ENCODE measurements at regions of chr6 and their contacts with region 1.

Region 1: GRCh38 chr6:25490018-25490801 is 161.8 kb upstream of the SCGN start:
- DNase-seq: peak; percentile 73
- H3K4me3 ChIP-seq: no peak overlapping the region
- H3K27ac ChIP-seq: no peak overlapping the region
- H3K4me1 ChIP-seq: no peaks in the 10 kb centered on the region
- H3K27me3 ChIP-seq: no peaks in the 10 kb centered on the region
- CTCF ChIP-seq: peak; percentile 73 to 83
- POLR2A ChIP-seq: no peak

Region 2: GRCh38 chr6:25223490-25223991 is 266.7 kb before region 1 on chr6:
- CTCF ChIA-PET with region 1: interaction called, 57 read pairs
- POLR2A ChIA-PET with region 1: no interaction called
- dilution Hi-C with region 1: no loop called
- intact Hi-C with region 1: loop called (anchors 1 kb)
- DNase-seq: peak; percentile 81
- H3K4me3 ChIP-seq: peak overlapping the region in 1 of 3 experiments; percentile 20
- H3K27ac ChIP-seq: no peak overlapping the region
- H3K4me1 ChIP-seq: peaks cover 6% of the 10 kb centered on the region
- H3K27me3 ChIP-seq: no peaks in the 10 kb centered on the region
- CTCF ChIP-seq: peak; percentile 68 to 72
- POLR2A ChIP-seq: no peak

Region 3: DNA sequence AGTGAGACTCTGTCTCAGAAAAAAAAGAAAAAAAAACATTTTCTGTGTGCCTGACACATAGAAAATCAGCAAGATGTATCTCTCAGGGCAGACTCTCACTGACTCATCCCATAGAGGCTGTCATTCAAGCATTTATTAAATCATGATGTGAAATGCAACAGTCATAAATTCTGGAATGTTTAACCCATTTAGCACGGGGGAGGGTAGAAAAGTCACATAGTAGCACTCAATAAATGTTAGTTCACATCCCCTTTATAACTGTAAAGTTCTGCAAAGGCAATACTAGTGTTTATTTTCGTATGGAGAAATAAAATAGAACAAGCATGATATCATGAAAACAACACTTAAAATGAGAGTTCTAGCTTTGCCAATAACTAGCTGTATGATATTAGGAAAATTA is 226.6 kb before region 1 on chr6:
- CTCF ChIA-PET with region 1: interaction called, 164 read pairs
- POLR2A ChIA-PET with region 1: no interaction called
- dilution Hi-C with region 1: no loop called
- intact Hi-C with region 1: loop called (anchors 1 kb)
- DNase-seq: no peak
- H3K4me3 ChIP-seq: no peak overlapping the region
- H3K27ac ChIP-seq: no peak overlapping the region
- H3K4me1 ChIP-seq: no peaks in the 10 kb centered on the region
- H3K27me3 ChIP-seq: no peaks in the 10 kb centered on the region
- CTCF ChIP-seq: no peak
- POLR2A ChIP-seq: no peak

Region 4: DNA sequence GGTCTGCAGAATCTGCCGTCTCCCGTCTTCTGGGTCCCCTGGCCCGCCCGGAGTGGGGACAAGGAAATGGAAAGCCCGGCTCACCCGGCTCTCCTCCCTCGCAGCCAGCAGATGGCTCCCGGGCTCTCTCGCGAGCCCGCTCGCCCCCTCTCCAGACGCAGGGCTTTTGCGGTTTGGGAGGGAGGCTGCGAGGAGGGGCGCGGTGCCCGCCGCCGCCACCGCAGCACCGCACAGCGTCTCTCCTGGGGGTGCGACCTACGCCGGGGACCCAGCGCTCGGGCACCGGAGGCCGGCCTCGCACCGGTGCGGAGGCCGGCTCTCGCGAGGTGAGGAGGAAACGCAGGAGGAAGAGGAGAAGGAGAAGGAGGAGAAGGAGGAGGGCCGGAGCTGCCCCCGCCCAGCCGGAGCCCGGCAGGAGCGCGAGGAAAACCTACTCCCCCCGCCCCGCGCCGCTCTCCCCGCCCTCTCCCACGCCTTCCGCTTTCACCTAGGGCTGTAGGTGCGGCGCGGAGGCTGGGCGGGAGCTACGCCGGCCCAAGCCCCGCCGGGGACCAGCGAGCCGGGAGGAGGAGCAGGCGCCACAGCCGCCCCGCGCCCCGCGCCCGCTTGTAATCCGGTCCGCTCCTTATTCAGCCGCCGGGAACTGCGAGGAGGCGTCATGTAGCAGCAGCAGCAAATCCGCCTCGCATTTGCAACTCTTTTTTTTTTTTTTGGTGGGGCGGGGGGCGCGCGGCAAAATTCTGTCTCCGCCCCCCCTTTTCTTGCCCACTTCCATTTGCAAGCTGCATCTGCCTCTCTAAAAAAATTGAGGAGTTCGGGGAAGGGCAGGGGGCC is 211.1 kb before region 1 on chr6 and contains the start of gene CARMIL1:
- CTCF ChIA-PET with region 1: interaction called, 161 read pairs
- POLR2A ChIA-PET with region 1: interaction called, 4 read pairs
- dilution Hi-C with region 1: no loop called
- intact Hi-C with region 1: loop called (anchors 1 kb)
- DNase-seq: peak; percentile 70
- H3K4me3 ChIP-seq: peak within 1 kb of the TSS; percentile 74 to 90 (median 87)
- H3K27ac ChIP-seq: peak within 1 kb of the TSS; percentile 18
- H3K4me1 ChIP-seq: peaks cover 10% of the 10 kb centered on the region
- H3K27me3 ChIP-seq: no peaks in the 10 kb centered on the region
- CTCF ChIP-seq: peak; percentile 50 to 84
- POLR2A ChIP-seq: no peak
- total RNA-seq, gene CARMIL1: 8.7 and 8.8 TPM in 2 replicates

Region 5: DNA sequence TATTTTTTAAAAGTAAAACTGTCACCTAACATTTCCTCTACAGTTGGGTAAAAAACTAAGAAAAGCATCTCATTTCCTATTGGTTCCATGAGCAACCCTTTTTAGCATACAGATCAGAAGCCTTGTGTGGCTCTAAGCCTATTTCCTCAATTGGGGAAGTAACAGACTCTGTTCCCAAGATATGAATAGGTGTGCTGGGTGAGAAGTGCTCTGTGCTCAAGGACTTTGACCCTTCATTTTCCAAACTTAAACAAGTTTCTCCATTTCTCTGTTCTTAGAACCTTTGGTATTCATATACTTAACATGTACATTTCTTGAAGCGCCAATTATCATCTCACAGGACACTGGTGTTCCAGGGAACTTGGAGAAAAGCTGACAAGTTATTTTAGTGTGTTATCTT is 187.0 kb before region 1 on chr6:
- CTCF ChIA-PET with region 1: no interaction called
- POLR2A ChIA-PET with region 1: no interaction called
- dilution Hi-C with region 1: no loop called
- intact Hi-C with region 1: no loop called
- DNase-seq: no peak
- H3K4me3 ChIP-seq: no peak overlapping the region
- H3K27ac ChIP-seq: no peak overlapping the region
- H3K4me1 ChIP-seq: no peaks in the 10 kb centered on the region
- H3K27me3 ChIP-seq: peaks cover 0 to 3% of the 10 kb centered on the region in 2 experiments
- CTCF ChIP-seq: no peak
- POLR2A ChIP-seq: no peak

Region 6: GRCh38 chr6:25506020-25506419 is 15.8 kb after region 1 on chr6:
- CTCF ChIA-PET with region 1: interaction called, 30 read pairs
- POLR2A ChIA-PET with region 1: no interaction called
- dilution Hi-C with region 1: no loop called
- intact Hi-C with region 1: no loop called
- DNase-seq: no peak
- H3K4me3 ChIP-seq: no peak overlapping the region
- H3K27ac ChIP-seq: no peak overlapping the region
- H3K4me1 ChIP-seq: no peaks in the 10 kb centered on the region
- H3K27me3 ChIP-seq: no peaks in the 10 kb centered on the region
- CTCF ChIP-seq: no peak
- POLR2A ChIP-seq: no peak

Region 7: DNA sequence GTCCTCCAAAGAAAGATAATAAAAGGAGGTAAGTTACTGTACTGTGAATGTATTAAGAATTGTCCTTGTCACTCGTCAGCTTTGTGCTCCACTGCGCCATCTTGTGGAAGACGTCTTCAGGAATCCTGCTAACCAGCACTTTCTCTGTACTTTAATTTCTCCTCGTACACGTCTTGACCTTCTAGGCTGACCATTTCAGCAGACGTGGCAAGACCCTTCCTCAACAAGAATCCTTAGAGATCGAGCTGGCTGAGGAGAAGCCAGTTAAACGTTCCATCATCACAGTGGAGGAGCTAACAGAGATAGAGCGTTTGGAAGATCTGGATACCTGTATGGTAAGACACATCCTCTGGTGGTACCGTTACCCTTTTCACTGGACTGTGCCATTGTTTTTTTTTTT is 66.3 kb after region 1 on chr6:
- CTCF ChIA-PET with region 1: interaction called, 7 read pairs
- POLR2A ChIA-PET with region 1: no interaction called
- dilution Hi-C with region 1: no loop called
- intact Hi-C with region 1: loop called (anchors 1 kb)
- DNase-seq: peak; percentile 83
- H3K4me3 ChIP-seq: no peak overlapping the region
- H3K27ac ChIP-seq: no peak overlapping the region
- H3K4me1 ChIP-seq: no peaks in the 10 kb centered on the region
- H3K27me3 ChIP-seq: no peaks in the 10 kb centered on the region
- CTCF ChIP-seq: peak; percentile 73 to 85
- POLR2A ChIP-seq: no peak